Caco-2 (cell line): ENCODE measurements at regions of chr6 and their contacts with region 1.

Region 1: DNA sequence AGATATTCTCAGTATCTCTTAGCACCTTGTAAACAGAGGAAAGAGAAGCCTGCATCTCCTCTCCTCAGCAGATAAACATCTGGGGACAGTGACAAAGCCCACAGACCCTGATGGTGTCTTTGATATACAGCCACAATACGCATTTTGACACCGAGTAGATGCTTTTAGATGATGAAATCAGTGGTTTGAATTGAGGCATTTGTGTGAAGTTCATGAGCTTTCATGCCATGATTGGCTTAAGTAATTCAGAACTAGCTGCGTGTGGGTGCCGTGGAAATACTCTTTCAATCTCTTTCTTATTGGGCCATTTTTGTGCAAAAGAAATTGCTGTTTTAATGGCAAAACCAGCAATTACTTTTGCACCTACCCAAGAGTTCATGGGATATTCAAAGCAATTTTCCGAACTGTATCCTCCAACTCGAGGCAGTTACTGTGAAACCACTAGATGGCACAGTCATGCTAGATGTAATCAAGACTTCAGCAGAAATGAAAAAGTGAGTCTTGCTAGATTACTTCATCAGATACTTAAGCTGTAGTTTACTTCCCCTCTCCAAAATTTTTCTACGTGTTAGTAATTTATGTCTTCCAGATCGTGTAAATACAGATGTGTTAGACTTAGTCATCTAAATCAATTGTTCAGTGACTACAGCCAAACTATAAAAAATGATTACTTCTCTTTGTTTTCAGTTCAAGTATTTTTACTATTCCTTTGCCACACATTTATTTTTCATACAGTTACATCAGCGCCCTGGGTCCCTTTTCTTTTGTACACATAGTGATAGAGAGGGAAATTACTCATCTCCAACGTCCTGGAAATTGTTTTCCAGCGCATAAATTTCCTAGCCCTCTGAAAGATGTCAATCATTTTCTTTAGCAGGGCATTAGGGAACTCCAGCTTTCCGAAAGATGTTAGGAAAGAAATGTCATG is 49.4 kb downstream of the IYD start:
- DNase-seq: peak in 1 of 2 experiments; percentile 61
- H3K4me3 ChIP-seq: peak overlapping the region; percentile 55
- H3K4me3 Mint-ChIP-seq: peak overlapping the region; percentile 86
- H3K27ac Mint-ChIP-seq: peak overlapping the region; percentile 95
- H3K4me1 ChIP-seq: no peaks in the 10 kb centered on the region; the same call in 1 of the 2 replicates
- H3K4me1 Mint-ChIP-seq: peaks cover 20% of the 10 kb centered on the region
- H3K27me3 ChIP-seq: no peaks in the 10 kb centered on the region
- H3K27me3 Mint-ChIP-seq: peaks cover 2% of the 10 kb centered on the region
- CTCF ChIP-seq: peak; percentile 70 to 84

Region 2: DNA sequence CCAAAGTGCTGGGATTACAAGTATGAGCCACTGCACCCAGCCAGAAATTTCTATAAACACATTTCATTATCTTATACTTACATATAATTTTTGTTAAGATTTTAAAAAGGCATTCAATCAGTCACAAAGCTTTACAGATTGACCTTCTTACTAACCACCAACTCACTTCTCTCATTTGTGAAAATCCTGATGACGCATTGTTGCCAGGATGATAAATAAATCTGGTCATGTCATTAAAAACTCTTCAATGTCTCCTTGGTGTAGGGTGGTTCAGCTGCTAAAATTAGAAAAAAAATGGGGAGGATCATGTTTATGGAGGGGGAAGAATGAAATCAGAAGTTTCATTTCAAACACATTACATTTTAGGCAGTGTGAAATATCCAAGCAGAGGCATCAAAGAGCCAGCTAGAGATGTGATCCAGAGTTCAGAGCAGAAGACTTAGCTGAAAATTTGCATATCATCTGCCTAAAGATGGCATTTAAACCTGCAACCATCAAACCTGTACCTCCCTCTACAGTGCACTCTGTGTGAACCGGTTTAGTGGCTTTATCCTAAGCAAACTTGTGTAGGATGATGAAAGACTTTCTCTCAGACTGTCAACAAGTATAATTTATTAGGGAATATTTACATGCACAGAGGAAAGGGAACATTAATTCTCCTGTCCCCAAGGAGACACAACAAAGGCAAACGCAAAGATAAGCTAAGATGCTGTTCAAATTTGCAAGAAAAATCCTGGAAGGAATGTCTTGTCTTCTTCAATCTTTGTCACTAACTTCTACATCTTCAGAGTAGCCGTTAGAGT is 96.6 kb after region 1 on chr6:
- CTCF ChIA-PET with region 1: no interaction called
- POLR2A ChIA-PET with region 1: no interaction called
- intact Hi-C with region 1: loop called (anchors 2 kb)
- DNase-seq: peak in 1 of 2 experiments; percentile 53
- H3K4me3 ChIP-seq: no peak overlapping the region
- H3K4me3 Mint-ChIP-seq: no peak overlapping the region
- H3K27ac Mint-ChIP-seq: peak overlapping the region; percentile 31
- H3K4me1 ChIP-seq: peaks cover 37% of the 10 kb centered on the region
- H3K4me1 Mint-ChIP-seq: peaks cover 39% of the 10 kb centered on the region
- H3K27me3 ChIP-seq: no peaks in the 10 kb centered on the region
- H3K27me3 Mint-ChIP-seq: no peaks in the 10 kb centered on the region
- CTCF ChIP-seq: no peak

Region 3: DNA sequence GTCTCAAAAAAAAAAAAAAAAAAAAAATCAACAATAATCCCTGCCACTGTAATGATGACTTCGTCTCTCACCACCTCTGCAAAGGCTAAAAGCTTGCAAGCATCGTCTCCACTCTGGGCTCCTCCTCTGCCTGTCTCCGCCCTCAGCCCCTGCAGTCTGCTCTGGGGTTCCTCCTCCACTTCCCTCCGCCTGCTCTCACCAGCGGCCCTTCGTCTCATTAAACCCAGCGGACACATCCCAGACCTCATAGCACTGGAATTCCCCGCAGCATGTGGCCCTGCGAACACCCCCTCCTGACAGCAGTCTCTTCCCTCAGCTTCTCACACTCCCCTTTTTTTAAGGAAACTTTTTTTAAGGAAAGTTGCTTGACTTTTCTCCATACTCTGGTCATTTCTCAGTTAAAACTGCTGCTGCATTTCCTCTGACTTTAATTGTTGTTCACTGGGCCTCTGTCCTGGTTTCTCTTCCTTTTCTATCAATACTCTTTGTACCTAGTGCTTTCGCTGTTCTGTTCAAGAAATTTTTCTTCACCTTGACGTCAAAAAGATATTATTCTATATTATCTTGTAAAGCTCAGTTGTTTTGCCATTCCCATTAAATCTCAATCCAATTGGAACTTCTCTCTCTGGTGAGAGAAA is 110.6 kb after region 1 on chr6:
- CTCF ChIA-PET with region 1: no interaction called
- POLR2A ChIA-PET with region 1: no interaction called
- intact Hi-C with region 1: no loop called
- DNase-seq: peak in 1 of 2 experiments; percentile 42
- H3K4me3 ChIP-seq: no peak overlapping the region
- H3K4me3 Mint-ChIP-seq: no peak overlapping the region
- H3K27ac Mint-ChIP-seq: peak overlapping the region; percentile 24
- H3K4me1 ChIP-seq: peaks cover 7% of the 10 kb centered on the region
- H3K4me1 Mint-ChIP-seq: peaks cover 13% of the 10 kb centered on the region
- H3K27me3 ChIP-seq: no peaks in the 10 kb centered on the region
- H3K27me3 Mint-ChIP-seq: no peaks in the 10 kb centered on the region
- CTCF ChIP-seq: no peak

Region 4: DNA sequence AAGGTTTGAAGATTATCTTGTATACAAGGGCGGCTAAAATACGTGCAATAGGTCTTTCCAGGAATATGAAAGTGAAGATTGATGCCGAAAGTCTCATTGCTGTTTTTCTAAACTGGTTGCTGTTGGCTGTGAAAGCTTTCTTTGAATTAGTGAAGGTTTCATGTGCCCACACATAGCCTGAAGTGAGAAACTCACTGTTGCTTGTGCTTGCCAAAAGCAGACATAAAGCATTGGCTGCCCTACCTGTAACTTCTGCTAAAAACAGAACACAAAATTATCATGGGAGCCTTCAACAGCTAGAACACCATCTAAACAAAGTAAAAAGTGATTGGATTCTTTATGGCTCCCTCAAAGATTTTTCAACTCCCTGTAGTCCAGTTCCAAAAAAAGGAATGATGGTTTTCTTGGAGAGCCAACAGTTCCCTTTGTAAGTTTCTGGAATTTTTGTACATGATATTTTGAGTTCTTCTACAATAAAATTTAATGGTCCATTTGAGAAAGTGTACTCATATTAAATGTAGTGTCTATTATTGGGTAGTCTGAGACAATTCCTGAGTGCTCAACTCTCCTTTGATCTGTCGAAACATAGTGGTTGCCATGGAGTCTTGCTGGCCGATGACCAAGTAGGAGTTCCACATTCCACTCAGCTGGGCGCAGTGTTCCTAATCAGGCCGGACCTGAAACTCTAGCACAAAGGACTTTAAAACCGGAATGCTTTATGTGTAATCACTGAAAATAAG is 250.0 kb after region 1 on chr6:
- CTCF ChIA-PET with region 1: no interaction called
- POLR2A ChIA-PET with region 1: interaction called, 4 read pairs
- intact Hi-C with region 1: loop called (anchors 1 kb)
- DNase-seq: peak; percentile 87 to 88
- H3K4me3 ChIP-seq: no peak overlapping the region
- H3K4me3 Mint-ChIP-seq: peak overlapping the region; percentile 29
- H3K27ac Mint-ChIP-seq: peak overlapping the region; percentile 95
- H3K4me1 ChIP-seq: peaks cover 22% of the 10 kb centered on the region
- H3K4me1 Mint-ChIP-seq: peaks cover 6% of the 10 kb centered on the region
- H3K27me3 ChIP-seq: no peaks in the 10 kb centered on the region
- H3K27me3 Mint-ChIP-seq: no peaks in the 10 kb centered on the region
- CTCF ChIP-seq: no peak

Region 5: GRCh38 chr6:150813319-150813992 is 395.3 kb after region 1 on chr6:
- CTCF ChIA-PET with region 1: interaction called, 36 read pairs
- POLR2A ChIA-PET with region 1: no interaction called
- intact Hi-C with region 1: loop called (anchors 1 kb)
- DNase-seq: no peak
- H3K4me3 ChIP-seq: no peak overlapping the region
- H3K4me3 Mint-ChIP-seq: no peak overlapping the region
- H3K27ac Mint-ChIP-seq: peak overlapping the region; percentile 45
- H3K4me1 ChIP-seq: no peaks in the 10 kb centered on the region
- H3K4me1 Mint-ChIP-seq: peaks cover 22% of the 10 kb centered on the region
- H3K27me3 ChIP-seq: no peaks in the 10 kb centered on the region
- H3K27me3 Mint-ChIP-seq: no peaks in the 10 kb centered on the region
- CTCF ChIP-seq: no peak

Region 6: DNA sequence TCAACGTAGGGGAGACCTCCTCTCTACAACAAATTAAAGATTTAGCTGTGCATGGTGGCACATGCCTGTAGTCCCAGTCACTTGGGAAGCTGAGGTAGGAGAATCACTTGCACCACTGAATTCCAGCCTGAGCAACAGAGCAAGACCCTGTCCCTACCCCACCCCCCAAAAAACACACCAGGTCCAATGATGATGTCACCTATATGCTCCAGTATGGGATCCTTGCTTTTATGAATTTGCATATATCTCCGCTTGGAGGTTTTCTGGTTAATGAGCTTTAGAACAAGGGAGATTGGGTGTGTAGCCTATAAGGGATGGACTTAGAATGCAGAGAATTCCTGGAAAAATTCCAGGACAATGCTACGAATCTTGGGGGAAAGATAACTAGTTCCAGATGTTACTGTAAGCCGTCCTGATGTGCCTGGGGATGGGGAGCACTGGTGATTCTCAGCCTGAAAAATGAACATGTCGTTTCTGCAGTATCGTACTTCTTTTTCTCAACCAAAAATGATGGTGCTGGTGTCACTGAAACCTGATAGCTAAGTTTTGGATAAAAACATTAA is 912.1 kb after region 1 on chr6:
- CTCF ChIA-PET with region 1: no interaction called
- POLR2A ChIA-PET with region 1: no interaction called
- intact Hi-C with region 1: loop called (anchors 10 kb)
- DNase-seq: no peak
- H3K4me3 ChIP-seq: no peak overlapping the region
- H3K4me3 Mint-ChIP-seq: no peak overlapping the region
- H3K27ac Mint-ChIP-seq: no peak overlapping the region
- H3K4me1 ChIP-seq: peaks cover under 1% of the 10 kb centered on the region; the same call in 1 of the 2 replicates
- H3K4me1 Mint-ChIP-seq: no peaks in the 10 kb centered on the region
- H3K27me3 ChIP-seq: peaks cover under 1% of the 10 kb centered on the region; the same call in 1 of the 2 replicates
- H3K27me3 Mint-ChIP-seq: no peaks in the 10 kb centered on the region
- CTCF ChIP-seq: no peak